ENCODE measurements at regions of chr17 and their contacts with region 1.

Region 1: DNA sequence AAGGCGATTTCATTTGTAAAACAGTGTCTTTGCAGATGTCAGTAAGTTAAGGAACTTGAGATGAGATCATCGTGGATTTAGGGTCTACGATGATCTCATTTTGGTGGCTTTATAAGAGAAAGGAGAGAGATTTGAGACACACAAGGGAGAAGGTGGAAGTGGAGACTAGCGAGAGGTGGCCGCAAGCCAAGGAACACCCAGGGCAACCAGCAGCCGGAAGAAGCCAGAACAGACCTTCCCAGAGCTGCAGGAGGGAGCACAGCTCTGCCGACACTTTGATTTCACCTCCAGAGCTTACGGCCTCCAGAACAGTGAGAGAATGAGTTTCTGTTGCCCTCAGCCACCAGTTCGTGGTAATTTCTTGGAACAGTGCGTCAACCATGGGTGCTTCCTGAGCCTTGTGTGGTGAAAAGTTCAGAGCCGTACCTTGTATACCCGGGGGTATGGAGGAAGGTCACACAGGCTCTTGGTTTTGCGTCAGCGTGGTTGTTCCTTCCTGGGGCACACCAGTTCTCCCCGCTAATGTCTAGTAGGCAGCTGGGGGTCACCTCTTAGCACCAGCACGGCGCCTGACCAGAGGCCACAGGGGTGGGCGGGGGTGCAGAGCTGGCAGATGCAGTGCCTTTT is 12.9 kb upstream of the SEC14L1 start:
- DNase-seq: peak; percentile 72
- H3K4me3 Mint-ChIP-seq: peak overlapping the region; percentile 68
- H3K27ac Mint-ChIP-seq: peak overlapping the region; percentile 94
- H3K4me1 Mint-ChIP-seq: peaks cover 31% of the 10 kb centered on the region
- H3K27me3 Mint-ChIP-seq: no peaks in the 10 kb centered on the region

Region 2: DNA sequence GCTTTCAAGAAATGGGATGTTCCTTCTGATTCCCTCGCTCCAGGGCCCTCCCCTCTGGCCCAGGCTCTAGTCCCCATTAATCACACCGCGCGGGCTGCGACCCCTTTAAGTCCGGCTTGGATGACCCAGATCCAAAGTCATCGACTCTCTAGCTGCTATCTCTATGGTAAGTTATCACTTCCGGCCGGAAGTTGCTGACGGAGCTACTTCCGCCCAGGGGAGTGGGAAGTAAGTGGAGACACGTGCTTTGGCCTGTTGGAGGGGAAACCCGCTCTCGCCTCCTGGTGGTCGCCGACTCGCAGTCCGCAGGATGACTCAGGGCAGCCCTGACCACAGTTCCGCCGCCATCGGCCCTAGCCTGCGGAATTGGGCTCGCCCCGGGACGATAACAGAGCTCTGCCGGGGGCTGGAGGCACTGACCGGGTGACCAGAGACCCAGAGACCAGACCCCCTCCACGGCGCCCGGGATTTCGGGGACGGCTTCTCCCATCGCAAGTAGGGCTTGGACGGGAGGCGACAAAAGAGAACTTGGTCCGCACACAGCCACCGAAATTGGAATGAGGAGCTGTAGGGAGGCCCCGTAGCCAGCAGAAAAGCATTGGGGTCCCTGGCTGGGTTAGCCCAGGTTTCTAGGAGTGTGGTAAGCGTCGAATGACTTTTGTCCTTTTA is 39.3 kb before region 1 on chr17:
- intact Hi-C with region 1: loop called (anchors 5 kb)
- DNase-seq: peak; percentile 80
- H3K4me3 Mint-ChIP-seq: peak overlapping the region; percentile 91
- H3K27ac Mint-ChIP-seq: peak overlapping the region; percentile 94
- H3K4me1 Mint-ChIP-seq: peaks cover 38% of the 10 kb centered on the region
- H3K27me3 Mint-ChIP-seq: peaks cover 2% of the 10 kb centered on the region